ENCODE measurements at regions of chr7 and their contacts with region 1.

Region 1: DNA sequence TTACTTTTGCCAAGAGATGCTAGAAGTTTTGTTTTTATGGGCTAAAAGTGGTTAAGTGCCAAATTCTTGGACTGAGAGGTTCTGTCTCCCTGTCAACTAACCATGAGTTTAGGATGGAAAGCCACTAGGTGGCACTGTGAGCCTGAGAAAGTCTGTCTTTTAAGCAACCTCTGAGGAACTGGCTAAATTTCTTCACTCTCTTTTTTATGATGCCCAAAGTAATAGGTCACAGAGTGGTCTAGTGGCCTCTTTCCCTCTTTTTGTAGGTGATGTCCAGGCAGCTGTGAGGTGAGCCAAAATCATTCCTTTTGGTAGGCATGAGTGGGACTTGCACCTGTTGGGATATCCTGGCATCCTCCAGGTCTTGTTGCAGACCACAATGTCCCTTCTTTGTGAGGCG is 56.8 kb downstream of the SND1 start:
- DNase-seq: peak; percentile 82
- ATAC-seq: peak; percentile 66
- H3K4me3 ChIP-seq: no peak overlapping the region
- H3K4me3 Mint-ChIP-seq: no peak overlapping the region
- H3K27ac ChIP-seq: no peak overlapping the region
- H3K27ac Mint-ChIP-seq: no peak overlapping the region
- H3K4me1 ChIP-seq: no peaks in the 10 kb centered on the region
- H3K4me1 Mint-ChIP-seq: no peaks in the 10 kb centered on the region
- H3K27me3 ChIP-seq: no peaks in the 10 kb centered on the region
- H3K27me3 Mint-ChIP-seq: no peaks in the 10 kb centered on the region
- CTCF ChIP-seq: peak; percentile 89

Region 2: GRCh38 chr7:127598318-127598717 is 110.5 kb before region 1 on chr7:
- CTCF ChIA-PET with region 1: no interaction called
- POLR2A ChIA-PET with region 1: no interaction called
- intact Hi-C with region 1: no loop called
- DNase-seq: no peak
- ATAC-seq: no peak
- H3K4me3 ChIP-seq: no peak overlapping the region
- H3K4me3 Mint-ChIP-seq: no peak overlapping the region
- H3K27ac ChIP-seq: no peak overlapping the region
- H3K27ac Mint-ChIP-seq: no peak overlapping the region
- H3K4me1 ChIP-seq: no peaks in the 10 kb centered on the region
- H3K4me1 Mint-ChIP-seq: no peaks in the 10 kb centered on the region
- H3K27me3 ChIP-seq: no peaks in the 10 kb centered on the region
- H3K27me3 Mint-ChIP-seq: peaks cover 6% of the 10 kb centered on the region
- CTCF ChIP-seq: no peak

Region 3: DNA sequence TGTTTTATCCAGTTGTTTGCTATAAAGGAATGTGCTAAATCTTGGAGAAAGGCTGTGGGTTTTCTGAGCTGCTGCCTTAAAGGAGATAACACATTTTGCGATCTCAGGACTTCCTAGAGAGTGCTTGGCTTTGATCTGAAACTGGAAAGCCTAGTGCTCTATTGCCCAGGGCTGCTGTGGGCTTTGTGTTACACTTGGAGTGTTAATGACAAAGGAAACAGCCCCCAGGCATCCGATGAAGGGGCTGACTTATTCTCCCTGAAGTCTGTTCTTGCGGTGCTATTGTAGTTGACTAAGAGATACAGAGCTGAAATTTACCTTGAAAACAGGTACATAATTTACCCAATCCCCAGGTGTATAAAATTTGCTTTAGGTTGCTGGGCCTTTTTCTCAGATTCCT is 17.7 kb after region 1 on chr7:
- CTCF ChIA-PET with region 1: interaction called, 16 read pairs
- POLR2A ChIA-PET with region 1: no interaction called
- intact Hi-C with region 1: no loop called
- DNase-seq: no peak
- ATAC-seq: no peak
- H3K4me3 ChIP-seq: no peak overlapping the region
- H3K4me3 Mint-ChIP-seq: no peak overlapping the region
- H3K27ac ChIP-seq: no peak overlapping the region
- H3K27ac Mint-ChIP-seq: no peak overlapping the region
- H3K4me1 ChIP-seq: no peaks in the 10 kb centered on the region
- H3K4me1 Mint-ChIP-seq: no peaks in the 10 kb centered on the region
- H3K27me3 ChIP-seq: no peaks in the 10 kb centered on the region
- H3K27me3 Mint-ChIP-seq: no peaks in the 10 kb centered on the region
- CTCF ChIP-seq: no peak

Region 4: DNA sequence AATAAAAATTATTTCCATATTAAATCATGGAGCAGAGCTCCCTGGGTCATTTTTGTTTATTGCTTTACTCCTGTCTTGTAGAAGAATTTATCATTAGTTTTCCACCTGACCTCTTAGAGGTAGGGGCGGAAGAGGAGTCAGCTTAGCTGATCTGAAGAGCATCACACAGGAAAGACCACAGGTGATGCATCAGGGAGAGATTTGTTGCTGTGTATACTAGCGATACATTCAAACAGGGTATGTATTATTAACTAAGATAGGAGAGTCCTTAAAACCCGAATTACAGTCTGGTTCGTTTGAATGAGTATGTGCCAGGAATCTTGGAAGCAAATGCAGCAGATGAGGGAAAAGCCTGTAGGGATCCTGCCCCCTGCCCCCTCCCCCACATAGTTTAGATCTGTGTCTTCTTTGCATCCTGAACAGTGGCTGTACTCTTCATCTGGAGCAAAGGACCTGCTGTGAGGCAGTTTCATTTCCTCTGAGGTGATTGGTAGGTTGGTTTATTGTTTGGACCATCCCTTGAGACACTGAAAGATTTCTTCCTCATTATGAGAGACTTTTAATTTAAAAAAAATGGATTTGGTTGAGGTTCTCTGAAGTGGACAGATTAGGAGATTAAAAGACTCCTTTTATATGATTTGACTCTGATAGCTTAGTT is 120.2 kb after region 1 on chr7:
- CTCF ChIA-PET with region 1: no interaction called
- POLR2A ChIA-PET with region 1: no interaction called
- intact Hi-C with region 1: no loop called
- DNase-seq: peak; percentile 32
- ATAC-seq: no peak
- H3K4me3 ChIP-seq: no peak overlapping the region
- H3K4me3 Mint-ChIP-seq: no peak overlapping the region
- H3K27ac ChIP-seq: peak overlapping the region in 1 of 2 donors; percentile 28
- H3K27ac Mint-ChIP-seq: no peak overlapping the region
- H3K4me1 ChIP-seq: peaks cover 6 to 7% of the 10 kb centered on the region in 2 donors
- H3K4me1 Mint-ChIP-seq: peaks cover 22% of the 10 kb centered on the region
- H3K27me3 ChIP-seq: no peaks in the 10 kb centered on the region
- H3K27me3 Mint-ChIP-seq: no peaks in the 10 kb centered on the region
- CTCF ChIP-seq: no peak

Region 5: DNA sequence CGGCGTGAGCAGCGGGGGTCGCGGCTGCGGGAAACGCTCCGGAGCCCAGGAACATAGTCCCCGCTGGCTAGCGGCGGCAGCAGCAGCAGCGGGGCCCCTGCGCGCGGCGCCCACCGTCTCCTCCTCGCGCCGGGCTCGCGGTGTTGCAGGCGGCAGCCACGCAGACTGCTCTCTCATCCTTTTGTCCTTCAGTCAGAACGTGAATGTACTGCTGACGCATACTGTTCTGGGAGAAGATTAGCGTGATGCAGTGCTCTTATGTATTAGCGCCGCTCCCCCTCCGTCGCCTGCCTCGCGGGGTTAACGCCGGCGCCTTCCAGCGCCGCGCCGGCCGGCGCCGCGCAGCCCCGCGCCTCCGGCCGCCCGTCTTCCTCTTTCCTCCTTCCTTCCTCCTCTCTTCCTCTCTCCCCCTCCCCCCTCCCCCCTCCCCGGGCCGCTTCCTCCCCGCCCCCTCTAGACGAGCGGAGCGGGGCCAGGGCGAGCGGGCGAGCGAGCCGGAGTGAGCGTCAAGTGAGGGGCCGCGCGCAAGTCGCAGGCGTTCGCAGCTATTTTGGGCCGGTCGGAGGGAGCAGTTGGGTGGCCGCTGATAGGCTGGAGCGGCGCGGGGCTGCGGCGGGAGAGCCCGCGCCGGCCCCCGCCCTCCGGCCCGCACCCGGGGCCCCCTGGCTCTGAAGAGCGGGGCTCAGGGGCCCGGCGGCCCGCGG is 323.3 kb after region 1 on chr7:
- CTCF ChIA-PET with region 1: interaction called, 12 read pairs
- POLR2A ChIA-PET with region 1: no interaction called
- intact Hi-C with region 1: no loop called
- DNase-seq: peak; percentile 74
- ATAC-seq: peak; percentile 83
- H3K4me3 ChIP-seq: peak overlapping the region; percentile 15 to 57 (median 51)
- H3K4me3 Mint-ChIP-seq: peak overlapping the region; percentile 96
- H3K27ac ChIP-seq: no peak overlapping the region
- H3K27ac Mint-ChIP-seq: peak overlapping the region; percentile 78
- H3K4me1 ChIP-seq: peaks cover 13 to 26% of the 10 kb centered on the region in 2 donors
- H3K4me1 Mint-ChIP-seq: peaks cover 28% of the 10 kb centered on the region
- H3K27me3 ChIP-seq: peaks cover 0 to 18% (median 0%) of the 10 kb centered on the region in 4 experiments
- H3K27me3 Mint-ChIP-seq: peaks cover 8% of the 10 kb centered on the region
- CTCF ChIP-seq: no peak

Region 6: DNA sequence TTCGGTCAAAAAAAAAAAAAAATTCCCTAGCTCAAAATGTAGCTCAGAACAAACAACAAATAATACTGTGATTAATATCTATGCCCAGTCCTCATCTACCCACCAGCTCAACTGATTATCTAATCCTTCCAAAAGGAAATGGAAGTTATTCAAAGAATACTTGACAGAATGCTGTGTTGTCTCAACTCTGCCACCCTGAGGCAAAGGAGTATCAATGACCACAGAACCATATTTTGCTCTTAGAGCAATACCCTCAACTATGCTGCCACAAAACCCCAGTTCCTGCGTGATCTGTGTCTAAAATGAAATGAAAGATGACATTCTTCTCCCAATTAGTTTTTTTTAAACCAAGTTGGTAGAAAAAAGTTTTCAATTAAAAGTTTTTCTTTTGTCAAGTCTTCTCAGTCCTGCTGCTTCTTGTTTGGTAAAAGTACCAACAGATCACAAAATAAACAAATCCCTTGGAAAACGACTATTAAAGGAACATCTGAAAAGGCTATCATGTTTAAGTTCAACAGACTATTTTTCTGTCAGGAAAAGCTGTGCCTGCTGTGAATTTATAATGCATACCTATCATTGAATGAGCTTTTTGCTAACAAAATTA is 613.4 kb after region 1 on chr7:
- CTCF ChIA-PET with region 1: interaction called, 12 read pairs
- POLR2A ChIA-PET with region 1: no interaction called
- intact Hi-C with region 1: loop called (anchors 5 kb)
- DNase-seq: peak; percentile 14
- ATAC-seq: no peak
- H3K4me3 ChIP-seq: no peak overlapping the region
- H3K4me3 Mint-ChIP-seq: no peak overlapping the region
- H3K27ac ChIP-seq: no peak overlapping the region
- H3K27ac Mint-ChIP-seq: no peak overlapping the region
- H3K4me1 ChIP-seq: no peaks in the 10 kb centered on the region
- H3K4me1 Mint-ChIP-seq: no peaks in the 10 kb centered on the region
- H3K27me3 ChIP-seq: no peaks in the 10 kb centered on the region
- H3K27me3 Mint-ChIP-seq: no peaks in the 10 kb centered on the region
- CTCF ChIP-seq: no peak